ENCODE measurements at regions of chr2 and their contacts with region 1.

Region 1: DNA sequence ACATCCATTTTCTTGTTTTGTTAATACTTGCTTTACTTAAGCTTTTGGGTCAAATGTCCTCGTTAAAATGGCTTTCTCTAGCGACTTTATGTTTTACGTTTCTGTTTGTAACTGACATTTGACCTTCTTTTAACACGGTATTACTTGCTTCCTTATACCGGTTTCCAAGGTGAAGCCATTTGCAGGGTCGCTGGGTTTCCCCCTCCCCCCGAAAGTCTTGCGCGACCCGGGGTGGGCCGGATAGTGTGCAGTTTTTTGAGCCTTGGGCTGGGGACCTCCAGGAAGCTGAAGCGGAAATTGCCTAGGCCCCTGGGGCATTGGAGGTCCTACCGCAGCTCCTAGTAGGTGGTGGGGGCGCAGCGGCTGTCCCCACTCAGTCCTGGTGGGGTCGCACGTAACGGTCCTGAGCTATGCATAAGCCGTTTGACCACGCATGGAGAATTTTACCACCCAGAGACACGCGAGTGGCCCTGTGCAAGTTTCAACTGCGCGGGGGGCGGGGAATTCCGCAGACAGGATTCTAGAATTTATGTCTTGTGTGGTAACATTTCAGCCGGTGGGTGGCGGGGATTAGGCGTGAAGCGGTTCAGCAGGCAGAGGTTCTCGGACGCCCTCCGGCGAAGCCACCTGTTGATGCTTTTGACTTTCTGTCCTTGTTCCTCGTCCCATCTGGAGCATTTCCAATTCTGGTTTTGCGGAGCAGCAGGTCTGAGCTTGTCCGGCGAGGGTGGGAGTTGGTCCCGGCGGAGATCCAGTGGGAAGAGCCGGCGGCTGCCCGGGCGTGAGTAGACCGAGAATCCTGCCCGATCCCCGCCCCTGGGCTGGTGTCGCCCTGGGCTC is 2.4 kb downstream of the CFLAR start:
- DNase-seq: peak; percentile 89
- H3K4me3 Mint-ChIP-seq: peak overlapping the region; percentile 71
- H3K27ac Mint-ChIP-seq: peak overlapping the region; percentile 99
- H3K4me1 Mint-ChIP-seq: peaks cover 39% of the 10 kb centered on the region
- H3K27me3 Mint-ChIP-seq: no peaks in the 10 kb centered on the region
- CTCF ChIP-seq: peak; percentile 55

Region 2: DNA sequence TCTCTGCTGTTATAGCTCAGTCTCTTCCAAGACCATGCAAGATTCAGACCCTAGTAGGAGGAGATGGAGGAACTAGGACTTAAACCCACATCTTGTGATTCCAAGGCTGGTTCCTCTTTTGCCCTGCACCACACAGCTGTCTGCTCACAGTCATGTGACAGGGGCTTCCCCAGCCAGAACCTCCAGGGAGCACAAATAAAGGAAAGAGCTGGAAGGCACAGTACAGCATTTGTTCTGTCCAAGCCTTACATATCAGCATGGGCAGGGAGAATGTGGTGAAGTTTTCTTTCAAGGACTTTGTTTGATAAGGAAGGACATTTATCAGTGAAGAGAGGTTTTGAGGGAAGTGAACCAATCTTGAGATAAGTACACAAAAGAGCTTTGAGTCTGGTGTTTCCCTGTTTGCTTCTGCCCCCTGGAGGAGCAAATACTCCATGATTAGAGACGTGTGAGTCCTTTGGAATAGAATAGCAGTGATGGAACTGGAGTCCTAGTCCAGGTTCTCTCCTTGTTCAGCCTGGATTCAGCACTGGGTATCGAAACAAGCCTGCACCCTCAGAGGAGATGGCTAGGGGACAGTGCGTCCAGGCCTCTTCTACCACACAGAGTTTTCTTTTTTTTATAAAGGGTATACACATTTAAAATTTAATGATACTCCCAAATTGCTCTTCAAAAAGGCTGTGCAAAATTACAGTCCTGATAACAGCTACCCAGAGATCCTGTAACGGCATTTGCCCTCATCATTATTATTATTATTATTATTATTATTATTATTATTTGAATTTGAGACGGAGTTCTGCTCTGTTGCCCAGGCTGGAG is 40.0 kb after region 1 on chr2:
- CTCF ChIA-PET with region 1: interaction called, 20 read pairs
- intact Hi-C with region 1: no loop called
- DNase-seq: peak; percentile 78
- H3K4me3 Mint-ChIP-seq: no peak overlapping the region
- H3K27ac Mint-ChIP-seq: peak overlapping the region; percentile 72
- H3K4me1 Mint-ChIP-seq: peaks cover 14% of the 10 kb centered on the region
- H3K27me3 Mint-ChIP-seq: no peaks in the 10 kb centered on the region
- CTCF ChIP-seq: peak; percentile 64